ENCODE measurements at regions of chr20 and their contacts with region 1.

Region 1: DNA sequence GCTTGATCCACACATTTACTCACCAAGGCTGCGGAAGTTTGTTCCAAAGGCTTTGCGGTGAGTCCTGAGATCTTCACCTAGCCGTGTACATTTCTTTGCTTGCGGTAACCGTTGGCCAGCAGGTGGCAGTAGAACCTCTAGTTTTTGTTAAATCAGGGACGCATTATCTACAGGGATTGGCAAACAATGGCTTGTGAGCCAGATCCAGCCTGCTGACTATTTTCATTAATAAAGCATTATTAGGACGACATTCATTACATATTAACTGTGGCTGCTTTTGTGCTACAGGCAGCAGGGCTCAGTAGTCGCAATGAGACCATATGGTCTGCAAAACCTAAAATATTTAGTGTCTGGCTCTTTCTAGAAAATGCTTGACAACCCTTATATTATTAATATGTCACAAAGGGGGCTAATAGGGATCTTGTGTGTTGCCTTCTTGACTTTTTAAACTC is 174.1 kb downstream of the DOK5 start:
- DNase-seq: peak; percentile 83
- ATAC-seq: peak; percentile 78

Region 2: DNA sequence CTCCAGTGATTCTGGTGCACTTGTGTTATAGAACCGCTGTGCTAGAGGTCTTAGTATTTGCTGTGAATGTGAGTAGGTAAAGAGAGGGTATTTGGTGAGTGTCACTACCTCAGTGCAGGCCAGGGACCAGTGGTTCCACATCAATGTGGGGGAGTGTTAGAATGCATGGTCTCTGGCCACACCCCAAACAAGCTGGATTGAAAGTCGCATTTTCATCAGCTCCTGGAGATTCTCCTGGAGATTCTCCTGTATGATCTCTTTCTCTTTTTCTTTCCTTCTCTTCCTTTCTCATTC is 552.4 kb before region 1 on chr20:
- intact Hi-C with region 1: loop called (anchors 5 kb)
- DNase-seq: no peak
- ATAC-seq: no peak

Region 3: DNA sequence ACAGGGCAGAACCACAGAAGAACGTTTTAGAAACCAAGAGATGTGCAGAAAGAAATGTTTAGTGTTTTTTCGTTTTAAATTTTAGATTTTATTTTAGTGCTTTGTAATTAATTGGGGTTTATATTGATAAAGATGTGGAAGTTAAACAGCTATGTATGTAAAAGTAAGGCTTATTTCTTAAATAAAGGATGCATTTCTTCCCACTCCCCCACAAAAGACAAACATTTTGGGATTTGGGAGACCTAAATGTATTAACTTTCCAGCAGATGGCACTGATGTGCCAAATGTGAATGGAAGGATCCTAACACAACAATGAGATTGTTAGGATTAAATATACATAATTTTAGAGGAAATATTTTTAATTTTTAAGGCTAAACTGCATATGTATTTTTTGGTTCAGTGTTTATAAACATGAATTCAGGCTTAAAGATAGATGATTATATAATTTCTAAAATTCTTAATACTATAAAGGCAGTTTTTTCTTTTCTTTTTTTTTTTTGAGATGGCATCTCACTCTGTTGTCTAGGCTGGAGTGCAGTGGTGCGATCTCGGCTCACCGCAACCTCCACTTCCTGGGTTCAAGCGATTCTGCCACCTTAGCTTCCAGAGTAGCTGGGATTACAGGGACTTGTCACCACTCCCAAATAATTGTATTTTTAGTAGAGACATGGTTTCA is 429.6 kb before region 1 on chr20:
- intact Hi-C with region 1: loop called (anchors 5 kb)
- DNase-seq: no peak
- ATAC-seq: no peak

Region 4: DNA sequence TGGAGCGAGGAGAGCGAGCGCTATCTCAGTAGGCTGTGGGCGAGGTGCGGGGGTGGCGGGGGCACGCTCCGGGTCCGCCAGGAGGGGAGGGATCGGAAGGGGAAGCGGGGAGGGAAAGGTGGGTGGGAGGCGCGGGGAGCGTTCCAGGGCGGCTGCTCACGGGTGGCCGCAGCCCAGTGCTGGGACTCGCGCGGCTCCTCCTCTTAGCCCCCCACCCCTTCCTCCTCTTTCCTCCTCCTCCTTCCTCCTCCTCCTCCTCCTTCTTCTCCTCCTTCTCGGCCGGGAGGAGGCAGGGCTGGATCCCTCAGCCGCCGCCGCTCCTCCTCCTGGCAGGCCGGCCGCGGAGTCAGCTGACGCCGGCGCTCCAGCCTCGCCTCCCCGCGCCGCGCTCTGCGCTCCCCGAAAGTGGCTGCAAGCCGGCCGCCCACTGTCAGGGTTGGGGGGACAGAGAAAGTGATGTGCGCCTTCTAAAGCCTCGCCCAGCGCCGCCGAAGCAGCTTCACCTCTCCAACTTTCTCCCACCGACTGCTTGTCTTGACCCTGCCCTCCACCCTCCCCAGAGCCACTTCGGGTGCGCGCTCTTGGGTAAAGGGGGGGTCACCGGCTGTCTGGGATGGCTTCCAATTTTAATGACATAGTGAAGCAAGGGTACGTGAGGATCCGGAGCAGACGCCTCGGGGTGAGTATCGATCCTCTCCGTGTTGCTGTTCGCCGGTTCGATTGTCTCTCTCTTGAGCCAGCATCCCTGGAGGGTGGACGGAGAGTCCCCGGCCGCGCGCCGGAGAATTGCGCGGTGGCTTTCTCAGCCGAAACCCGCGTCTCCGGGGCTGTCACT is 174.0 kb before region 1 on chr20 and contains the start of gene DOK5:
- intact Hi-C with region 1: loop called (anchors 10 kb)
- DNase-seq: peak; percentile 71
- ATAC-seq: peak; percentile 93
- total RNA-seq, gene DOK5: 1.8 TPM

Region 5: DNA sequence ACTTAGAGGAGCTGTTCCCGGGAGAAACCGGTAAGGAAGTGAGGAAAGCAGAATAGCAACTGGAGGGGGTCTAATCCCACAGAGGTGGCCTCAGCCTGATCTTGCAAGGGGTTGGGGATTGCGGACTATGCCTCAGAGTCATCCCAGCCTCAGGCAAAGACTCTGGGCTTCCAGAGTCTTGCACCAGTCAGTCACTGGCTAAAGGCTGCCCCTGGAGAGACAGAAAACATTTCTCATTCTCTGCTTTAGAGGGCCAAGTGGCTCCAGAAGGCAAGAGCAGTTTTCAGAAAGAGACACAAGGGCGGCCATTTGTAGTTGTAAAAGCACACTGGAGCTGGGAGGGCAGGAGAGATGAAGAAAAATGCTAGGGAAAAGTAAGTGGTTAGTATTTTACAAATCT is 155.1 kb after region 1 on chr20:
- intact Hi-C with region 1: no loop called
- DNase-seq: no peak
- ATAC-seq: no peak

Measured in left ventricle myocardium superior (tissue), 1 donor.